ENCODE measurements at regions of chr9 and their contacts with region 1.

Region 1: DNA sequence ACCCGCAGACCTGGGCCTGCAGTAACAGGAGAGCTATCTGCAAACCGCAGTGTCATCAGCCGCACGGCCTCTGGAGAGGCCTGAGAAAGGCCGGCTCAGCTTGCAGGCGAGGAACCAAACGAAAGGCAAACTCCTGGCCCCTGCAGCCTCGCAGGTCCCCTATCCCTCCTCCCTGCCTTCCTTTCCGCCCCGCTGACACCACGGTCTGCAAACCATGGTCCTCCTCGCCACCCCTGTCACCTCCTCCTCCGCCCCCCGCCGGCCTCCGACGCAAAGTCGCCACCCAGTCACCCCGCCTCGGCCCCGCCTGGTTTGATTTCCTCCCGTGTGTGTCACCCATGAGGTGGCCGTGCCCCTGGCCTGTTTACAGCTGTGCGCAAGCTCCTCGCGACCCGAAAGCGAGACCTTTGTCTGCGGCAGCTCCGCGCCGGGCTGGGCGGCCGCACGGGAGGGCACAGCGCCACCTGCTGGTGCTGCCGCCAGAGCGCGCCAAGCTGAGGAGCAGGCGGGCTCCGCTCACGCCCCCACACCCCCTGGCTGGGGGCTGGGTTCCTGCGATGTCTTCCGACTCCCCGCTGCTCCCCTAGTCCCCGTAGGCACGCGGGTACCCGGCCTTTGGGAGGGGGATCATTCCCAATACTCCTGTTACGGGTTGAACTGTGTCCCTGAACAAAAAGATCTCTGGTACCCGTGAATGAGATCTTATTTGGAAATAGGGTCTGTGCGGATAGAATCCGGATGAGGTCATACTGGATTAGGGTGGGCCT is 19.4 kb downstream of the GBGT1 start:
- DNase-seq: peak; percentile 73 to 98 (median 93)
- ATAC-seq: peak; percentile 46
- H3K4me3 ChIP-seq: peak overlapping the region; percentile 46
- H3K4me3 Mint-ChIP-seq: peak overlapping the region; percentile 76
- H3K27ac ChIP-seq: peak overlapping the region; percentile 71 to 83
- H3K27ac Mint-ChIP-seq: peak overlapping the region; percentile 95
- H3K4me1 ChIP-seq: peaks cover 87% of the 10 kb centered on the region
- H3K4me1 Mint-ChIP-seq: peaks cover 67% of the 10 kb centered on the region
- H3K27me3 ChIP-seq: no peaks in the 10 kb centered on the region
- H3K27me3 Mint-ChIP-seq: no peaks in the 10 kb centered on the region
- CTCF ChIP-seq: peak; percentile 99

Region 2: GRCh38 chr9:133023117-133023890 is 121.0 kb before region 1 on chr9:
- CTCF ChIA-PET with region 1: interaction called, 10 read pairs
- POLR2A ChIA-PET with region 1: interaction called, 3 read pairs
- intact Hi-C with region 1: loop called in 1 of 2 experiments (anchors 2 kb)
- DNase-seq: peak in 10 of 14 experiments; percentile 12 to 59 (median 36)
- ATAC-seq: no peak
- H3K4me3 ChIP-seq: no peak overlapping the region
- H3K4me3 Mint-ChIP-seq: no peak overlapping the region
- H3K27ac ChIP-seq: no peak overlapping the region
- H3K27ac Mint-ChIP-seq: no peak overlapping the region
- H3K4me1 ChIP-seq: peaks cover 14% of the 10 kb centered on the region
- H3K4me1 Mint-ChIP-seq: peaks cover 10% of the 10 kb centered on the region
- H3K27me3 ChIP-seq: no peaks in the 10 kb centered on the region
- H3K27me3 Mint-ChIP-seq: peaks cover 5% of the 10 kb centered on the region
- CTCF ChIP-seq: no peak

Region 3: GRCh38 chr9:133094842-133095393 is 49.4 kb before region 1 on chr9:
- CTCF ChIA-PET with region 1: interaction called, 39 read pairs
- POLR2A ChIA-PET with region 1: interaction called, 4 read pairs
- intact Hi-C with region 1: no loop called
- DNase-seq: no peak
- ATAC-seq: no peak
- H3K4me3 ChIP-seq: no peak overlapping the region
- H3K4me3 Mint-ChIP-seq: no peak overlapping the region
- H3K27ac ChIP-seq: no peak overlapping the region
- H3K27ac Mint-ChIP-seq: no peak overlapping the region
- H3K4me1 ChIP-seq: no peaks in the 10 kb centered on the region
- H3K4me1 Mint-ChIP-seq: no peaks in the 10 kb centered on the region
- H3K27me3 ChIP-seq: no peaks in the 10 kb centered on the region
- H3K27me3 Mint-ChIP-seq: no peaks in the 10 kb centered on the region
- CTCF ChIP-seq: peak; percentile 7

Region 4: DNA sequence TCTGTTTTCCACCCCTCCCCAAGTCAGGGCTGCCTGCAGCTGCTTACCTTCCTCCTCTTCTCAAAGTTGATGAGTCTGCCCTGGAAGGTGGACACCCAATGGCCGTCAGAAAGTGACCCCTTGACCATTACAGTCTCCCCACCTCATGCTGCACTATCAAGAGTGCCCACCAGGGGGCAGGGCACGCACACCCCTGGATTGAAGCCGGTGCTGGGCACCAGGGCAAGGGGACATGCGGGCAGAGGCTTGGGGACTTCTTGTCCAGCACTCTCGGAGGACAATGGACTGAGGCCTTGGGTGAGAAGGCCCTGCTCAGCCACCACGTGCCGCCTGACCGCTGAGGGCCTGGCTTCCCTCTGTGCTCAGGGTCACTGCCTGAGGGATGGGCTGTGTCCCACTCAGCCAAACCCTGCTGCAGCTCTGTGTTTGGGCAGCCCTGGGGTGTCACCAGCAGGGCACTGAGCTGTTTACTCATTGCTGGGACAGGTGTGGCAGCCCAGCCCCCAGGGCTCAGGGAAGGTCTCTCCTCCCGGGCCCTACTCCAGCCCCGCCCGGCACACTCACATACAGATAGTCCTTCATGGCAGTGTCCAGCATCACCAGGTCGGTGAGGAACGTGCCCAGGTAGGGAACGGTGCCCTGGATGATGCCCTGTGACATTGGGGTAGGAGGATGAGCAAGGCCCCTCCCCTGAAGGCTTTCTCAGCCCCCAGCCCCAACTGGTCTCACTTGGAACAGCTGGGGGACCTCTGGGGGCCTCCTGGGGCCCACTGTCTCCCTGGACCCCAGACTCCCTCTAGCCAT is 40.9 kb before region 1 on chr9:
- CTCF ChIA-PET with region 1: interaction called, 39 read pairs
- POLR2A ChIA-PET with region 1: interaction called, 7 read pairs
- intact Hi-C with region 1: loop called (anchors 1 kb)
- DNase-seq: peak; percentile 38 to 76 (median 50)
- ATAC-seq: peak; percentile 50
- H3K4me3 ChIP-seq: no peak overlapping the region
- H3K4me3 Mint-ChIP-seq: peak overlapping the region; percentile 11
- H3K27ac ChIP-seq: peak overlapping the region in 1 of 2 donors; percentile 19
- H3K27ac Mint-ChIP-seq: peak overlapping the region; percentile 51
- H3K4me1 ChIP-seq: no peaks in the 10 kb centered on the region
- H3K4me1 Mint-ChIP-seq: no peaks in the 10 kb centered on the region
- H3K27me3 ChIP-seq: no peaks in the 10 kb centered on the region
- H3K27me3 Mint-ChIP-seq: no peaks in the 10 kb centered on the region
- CTCF ChIP-seq: peak; percentile 96

Region 5: GRCh38 chr9:133115448-133116345 is 28.6 kb before region 1 on chr9:
- CTCF ChIA-PET with region 1: interaction called, 41 read pairs
- POLR2A ChIA-PET with region 1: interaction called, 34 read pairs
- intact Hi-C with region 1: loop called in 1 of 2 experiments (anchors 2 kb)
- DNase-seq: peak in 6 of 14 experiments; percentile 9 to 69 (median 48)
- ATAC-seq: peak; percentile 61
- H3K4me3 ChIP-seq: no peak overlapping the region
- H3K4me3 Mint-ChIP-seq: peak overlapping the region; percentile 30
- H3K27ac ChIP-seq: no peak overlapping the region
- H3K27ac Mint-ChIP-seq: peak overlapping the region; percentile 81
- H3K4me1 ChIP-seq: peaks cover 90% of the 10 kb centered on the region
- H3K4me1 Mint-ChIP-seq: peaks cover 49% of the 10 kb centered on the region
- H3K27me3 ChIP-seq: no peaks in the 10 kb centered on the region
- H3K27me3 Mint-ChIP-seq: no peaks in the 10 kb centered on the region
- CTCF ChIP-seq: no peak

Region 6: DNA sequence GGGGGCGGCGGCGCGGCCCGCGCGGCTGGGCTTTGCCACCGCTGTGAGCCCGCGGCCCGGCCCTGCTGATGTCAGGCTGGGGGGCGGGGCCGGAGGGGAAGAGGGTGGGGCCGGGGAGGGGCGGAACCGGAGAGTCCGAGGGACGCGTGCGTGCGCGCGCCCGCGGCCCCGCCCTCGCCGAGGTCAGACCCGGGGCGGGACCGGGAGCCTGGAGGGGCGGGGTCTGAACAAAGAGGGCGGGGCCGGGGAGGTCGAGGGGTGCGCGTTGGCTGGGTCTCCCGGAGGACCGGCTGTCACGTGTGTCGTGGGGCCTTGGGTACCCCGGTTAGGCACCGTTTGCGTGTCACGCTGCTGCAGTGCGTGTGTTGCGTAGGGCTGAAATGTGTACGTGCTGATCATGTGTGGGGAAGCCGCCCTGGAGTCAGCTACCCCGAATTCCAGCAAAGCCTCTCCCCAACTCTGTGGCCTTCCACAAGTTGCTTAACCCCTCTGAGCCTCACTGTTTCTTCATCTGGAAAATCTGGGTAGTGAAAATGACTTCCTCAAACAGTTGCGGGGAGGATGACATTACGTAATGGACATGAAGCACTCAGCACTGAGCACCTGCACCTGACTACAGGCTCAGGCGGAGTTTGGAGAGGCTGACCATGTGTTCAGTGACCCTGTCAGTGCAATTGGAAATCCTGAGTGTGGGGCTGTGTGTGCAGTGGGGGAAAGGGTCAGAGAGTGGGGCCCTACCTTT is 23.0 kb before region 1 on chr9 and contains the start of gene RALGDS:
- CTCF ChIA-PET with region 1: interaction called, 41 read pairs
- POLR2A ChIA-PET with region 1: interaction called, 34 read pairs
- intact Hi-C with region 1: loop called (anchors 1 to 2 kb)
- DNase-seq: peak; percentile 83 to 97 (median 90)
- ATAC-seq: peak; percentile 75
- H3K4me3 ChIP-seq: peak within 1 kb of the TSS; percentile 56
- H3K4me3 Mint-ChIP-seq: peak within 1 kb of the TSS; percentile 85
- H3K27ac ChIP-seq: peak within 1 kb of the TSS; percentile 75 to 98
- H3K27ac Mint-ChIP-seq: peak within 1 kb of the TSS; percentile 96
- H3K4me1 ChIP-seq: peaks cover 90% of the 10 kb centered on the region
- H3K4me1 Mint-ChIP-seq: peaks cover 61% of the 10 kb centered on the region
- H3K27me3 ChIP-seq: no peaks in the 10 kb centered on the region
- H3K27me3 Mint-ChIP-seq: no peaks in the 10 kb centered on the region
- CTCF ChIP-seq: no peak
- total RNA-seq, gene RALGDS: 166 to 168 TPM

Region 7: DNA sequence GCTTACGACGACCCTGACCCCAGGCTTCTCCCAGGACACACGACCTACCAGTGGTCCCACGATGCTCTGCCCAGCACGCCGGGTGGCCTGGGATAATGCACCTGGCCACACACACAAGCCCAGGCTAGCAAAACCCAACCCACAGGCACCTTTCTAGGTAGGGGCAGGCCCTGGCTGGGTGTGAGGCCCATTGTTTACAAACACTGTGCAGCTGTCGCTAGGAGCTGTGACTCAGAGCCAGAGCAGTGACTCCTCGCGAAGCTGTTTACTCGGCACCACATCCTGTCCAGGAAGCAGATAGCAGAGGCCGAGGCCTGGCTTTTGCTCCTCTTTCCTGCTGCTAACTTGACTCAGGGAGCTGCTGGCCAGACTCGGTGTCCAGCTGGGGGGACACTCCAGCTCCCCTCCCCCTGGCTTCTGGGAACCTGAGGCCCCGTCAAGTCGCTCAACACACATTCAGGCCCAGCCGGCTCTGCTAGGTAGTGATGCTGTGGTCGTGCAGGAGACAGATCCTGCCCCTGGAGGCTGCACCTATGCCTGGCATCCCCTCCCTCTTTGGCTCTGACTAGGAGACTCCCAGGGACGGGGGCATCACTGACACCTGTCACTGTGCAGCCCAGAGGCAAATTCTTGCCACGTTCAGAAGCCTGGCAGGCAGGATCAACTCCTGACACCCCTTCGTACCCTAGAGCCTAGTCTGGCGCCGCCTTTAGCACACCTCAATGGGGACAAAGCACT is 10.5 kb before region 1 on chr9:
- CTCF ChIA-PET with region 1: interaction called, 61 read pairs
- POLR2A ChIA-PET with region 1: interaction called, 48 read pairs
- intact Hi-C with region 1: loop called in 1 of 2 experiments (anchors 1 kb)
- DNase-seq: peak; percentile 83 to 98 (median 88)
- ATAC-seq: peak; percentile 80
- H3K4me3 ChIP-seq: peak overlapping the region; percentile 20
- H3K4me3 Mint-ChIP-seq: peak overlapping the region; percentile 87
- H3K27ac ChIP-seq: peak overlapping the region; percentile 98
- H3K27ac Mint-ChIP-seq: peak overlapping the region; percentile 99
- H3K4me1 ChIP-seq: peaks cover 100% of the 10 kb centered on the region
- H3K4me1 Mint-ChIP-seq: peaks cover 70% of the 10 kb centered on the region
- H3K27me3 ChIP-seq: no peaks in the 10 kb centered on the region
- H3K27me3 Mint-ChIP-seq: no peaks in the 10 kb centered on the region
- CTCF ChIP-seq: peak; percentile 9

Region 8: DNA sequence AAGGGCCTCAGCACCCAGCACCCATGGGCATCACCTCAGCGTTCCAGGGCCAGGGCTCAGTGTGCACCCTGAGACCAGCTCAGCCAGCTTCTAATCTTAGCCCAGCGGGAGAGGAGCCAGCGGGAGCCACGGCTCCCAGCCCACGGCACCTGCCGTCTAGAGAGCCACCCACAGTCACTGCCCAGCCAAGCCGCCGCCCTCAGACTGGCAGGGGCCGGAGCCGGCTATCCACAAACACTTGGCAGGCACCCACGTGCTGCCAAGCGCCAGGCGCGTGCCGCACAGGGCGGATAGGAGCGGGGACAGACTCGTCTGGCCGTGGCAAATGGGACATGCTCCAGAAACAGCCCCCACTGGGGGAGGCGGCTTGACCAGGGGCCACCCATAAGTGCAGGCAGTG is 904.9 kb after region 1 on chr9:
- CTCF ChIA-PET with region 1: no interaction called
- POLR2A ChIA-PET with region 1: no interaction called
- intact Hi-C with region 1: no loop called
- DNase-seq: no peak
- ATAC-seq: no peak
- H3K4me3 ChIP-seq: no peak overlapping the region
- H3K4me3 Mint-ChIP-seq: no peak overlapping the region
- H3K27ac ChIP-seq: no peak overlapping the region
- H3K27ac Mint-ChIP-seq: no peak overlapping the region
- H3K4me1 ChIP-seq: no peaks in the 10 kb centered on the region
- H3K4me1 Mint-ChIP-seq: no peaks in the 10 kb centered on the region
- H3K27me3 ChIP-seq: no peaks in the 10 kb centered on the region
- H3K27me3 Mint-ChIP-seq: no peaks in the 10 kb centered on the region
- CTCF ChIP-seq: no peak